H1 (cell line): ENCODE measurements at regions of chr2 and their contacts with region 1.

Region 1: DNA sequence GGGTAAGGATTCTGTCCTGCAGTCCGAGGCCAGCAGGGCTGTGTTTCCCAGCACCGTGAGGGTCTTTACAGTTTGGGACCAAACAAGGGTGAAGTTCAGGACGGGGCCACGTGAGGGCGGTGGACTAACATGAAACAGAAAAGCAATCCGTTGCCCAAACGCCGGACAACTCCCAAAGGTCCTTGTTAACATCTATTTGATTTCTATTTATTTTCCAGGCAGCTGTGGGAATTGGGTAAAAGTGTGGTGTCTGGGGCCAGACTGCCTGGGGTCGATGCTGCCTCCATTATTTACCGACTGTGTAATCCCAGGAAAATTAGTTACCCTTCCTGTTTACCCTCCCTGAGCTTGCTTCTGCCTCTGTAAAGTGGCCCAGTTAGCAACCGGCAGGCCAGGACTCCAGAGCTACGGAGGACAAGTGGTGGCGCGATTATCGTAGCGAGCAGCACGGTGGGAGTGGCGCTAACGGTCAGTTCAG is 66.3 kb upstream of the TCF7L1 start:
- DNase-seq: peak; percentile 65 to 95
- H3K4me3 ChIP-seq: peak overlapping the region in 3 of 4 experiments; percentile 25 to 49 (median 47); a peak in 4 of 8 replicates
- H3K27ac ChIP-seq: no peak overlapping the region
- H3K4me1 ChIP-seq: peaks cover 8 to 18% (median 10%) of the 10 kb centered on the region in 4 experiments
- H3K27me3 ChIP-seq: peaks cover 0 to 4% (median 0%) of the 10 kb centered on the region in 4 experiments; a peak in 4 of 7 replicates
- CTCF ChIP-seq: peak; percentile 86 to 91 (median 90)
- EP300 ChIP-seq: no peak
- POLR2A ChIP-seq: no peak
- RAD21 ChIP-seq: peak; percentile 92

Region 2: DNA sequence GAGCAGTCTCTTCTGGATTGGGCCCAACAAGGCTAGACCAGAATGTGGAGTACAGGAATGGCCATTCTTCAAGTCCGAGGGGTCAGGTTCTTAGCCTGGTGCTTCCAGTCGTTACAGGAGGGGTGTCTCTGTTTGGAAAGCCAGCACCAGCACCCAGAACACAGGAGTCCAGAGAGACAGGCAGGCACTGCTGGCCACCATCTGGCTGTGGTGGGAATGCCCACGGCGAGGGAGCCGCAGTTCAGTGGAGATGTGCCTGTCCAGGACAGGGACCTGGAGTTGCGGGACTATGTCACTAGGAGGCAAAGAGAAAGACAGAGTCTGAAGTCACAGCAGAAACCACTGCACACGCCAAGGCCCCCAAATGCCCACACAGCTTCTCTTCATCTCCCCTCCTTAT is 245.1 kb before region 1 on chr2:
- CTCF ChIA-PET with region 1: no interaction called
- POLR2A ChIA-PET with region 1: no interaction called
- DNase-seq: no peak
- H3K4me3 ChIP-seq: no peak overlapping the region
- H3K27ac ChIP-seq: no peak overlapping the region
- H3K4me1 ChIP-seq: no peaks in the 10 kb centered on the region
- H3K27me3 ChIP-seq: no peaks in the 10 kb centered on the region
- CTCF ChIP-seq: 0 out of 4 replicates have a peak, but pooled peaks of 1 of the 3 experiments have one; percentile 6
- EP300 ChIP-seq: no peak
- POLR2A ChIP-seq: no peak
- RAD21 ChIP-seq: peak in 1 of 2 experiments; percentile 10; a peak in 1 of 4 replicates

Region 3: DNA sequence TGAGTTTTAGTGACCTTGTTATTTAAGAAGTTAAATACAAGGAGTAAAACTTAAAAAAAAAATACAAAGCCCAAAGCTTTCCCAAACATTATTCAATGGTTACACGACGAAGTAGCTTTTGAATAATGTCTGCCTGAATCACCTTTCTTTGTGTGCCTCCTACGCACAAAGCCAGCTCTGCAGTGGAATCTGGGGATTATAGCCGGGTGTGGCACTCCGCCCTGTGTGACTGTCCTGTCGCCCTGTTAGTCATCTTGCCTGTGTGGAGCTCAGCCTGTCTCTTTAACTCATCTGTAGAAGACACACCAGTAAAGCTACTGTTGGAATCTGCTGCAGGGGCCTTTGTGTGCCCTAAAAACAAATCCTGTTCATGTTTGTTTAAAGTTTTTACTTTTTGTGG is 13.1 kb before region 1 on chr2:
- CTCF ChIA-PET with region 1: interaction called, 12 read pairs
- POLR2A ChIA-PET with region 1: interaction called, 6 read pairs
- DNase-seq: no peak
- H3K4me3 ChIP-seq: no peak overlapping the region
- H3K27ac ChIP-seq: no peak overlapping the region
- H3K4me1 ChIP-seq: peaks cover 0 to 4% (median 0%) of the 10 kb centered on the region in 4 experiments; a peak in 3 of 7 replicates
- H3K27me3 ChIP-seq: no peaks in the 10 kb centered on the region
- CTCF ChIP-seq: no peak
- EP300 ChIP-seq: no peak
- POLR2A ChIP-seq: no peak; a peak in 1 of 3 replicates
- RAD21 ChIP-seq: no peak

Region 4: GRCh38 chr2:85112906-85113630 is 46.2 kb after region 1 on chr2:
- CTCF ChIA-PET with region 1: interaction called, 10 read pairs
- POLR2A ChIA-PET with region 1: no interaction called
- DNase-seq: no peak
- H3K4me3 ChIP-seq: no peak overlapping the region
- H3K27ac ChIP-seq: no peak overlapping the region
- H3K4me1 ChIP-seq: no peaks in the 10 kb centered on the region
- H3K27me3 ChIP-seq: peaks cover 0 to 14% (median 6%) of the 10 kb centered on the region in 4 experiments; a peak in 5 of 7 replicates
- CTCF ChIP-seq: no peak
- EP300 ChIP-seq: no peak
- POLR2A ChIP-seq: no peak
- RAD21 ChIP-seq: no peak

Region 5: GRCh38 chr2:85288244-85288725 is 221.4 kb after region 1 on chr2:
- CTCF ChIA-PET with region 1: interaction called, 47 read pairs
- POLR2A ChIA-PET with region 1: no interaction called
- DNase-seq: no peak
- H3K4me3 ChIP-seq: no peak overlapping the region
- H3K27ac ChIP-seq: no peak overlapping the region
- H3K4me1 ChIP-seq: peaks cover 0 to 14% (median under 1%) of the 10 kb centered on the region in 4 experiments; a peak in 2 of 7 replicates
- H3K27me3 ChIP-seq: no peaks in the 10 kb centered on the region
- CTCF ChIP-seq: no peak
- EP300 ChIP-seq: no peak
- POLR2A ChIP-seq: no peak
- RAD21 ChIP-seq: no peak

Region 6: GRCh38 chr2:85308896-85309555 is 242.1 kb after region 1 on chr2:
- CTCF ChIA-PET with region 1: interaction called, 136 read pairs
- POLR2A ChIA-PET with region 1: interaction called, 3 read pairs
- DNase-seq: no peak
- H3K4me3 ChIP-seq: no peak overlapping the region
- H3K27ac ChIP-seq: no peak overlapping the region
- H3K4me1 ChIP-seq: peaks cover 0 to 8% (median 2%) of the 10 kb centered on the region in 4 experiments; a peak in 5 of 7 replicates
- H3K27me3 ChIP-seq: no peaks in the 10 kb centered on the region
- CTCF ChIP-seq: no peak
- EP300 ChIP-seq: no peak
- POLR2A ChIP-seq: no peak
- RAD21 ChIP-seq: no peak